Left ventricle myocardium superior (tissue), 1 donor: ENCODE measurements at regions of chr7 and their contacts with region 1.

Region 1: DNA sequence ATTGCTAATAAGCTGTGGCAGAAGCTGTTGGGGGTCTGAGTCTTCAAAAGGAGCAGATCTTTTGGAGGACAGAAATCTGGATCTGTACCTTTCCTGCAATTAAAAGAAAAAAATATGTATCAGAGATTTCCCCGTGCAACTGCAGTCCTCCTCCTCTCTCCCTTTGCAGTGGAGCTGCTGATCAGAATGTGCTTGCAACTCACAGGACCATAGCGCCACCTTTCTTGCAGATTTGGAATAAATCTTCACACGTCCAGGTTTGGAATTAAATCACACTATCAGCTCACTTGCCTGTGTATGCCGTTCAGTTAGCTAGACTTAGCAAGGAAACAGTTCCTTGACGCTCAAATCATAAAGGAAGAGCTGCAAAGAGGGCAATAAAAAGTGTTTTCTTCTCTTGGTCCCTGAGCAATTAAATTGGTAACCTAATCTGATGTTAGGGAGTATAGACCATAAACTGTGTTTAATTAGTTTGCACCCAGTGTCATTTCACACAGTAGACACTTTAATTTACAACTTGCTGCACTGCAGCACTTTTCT is 77.4 kb downstream of the PON1 start:
- DNase-seq: no peak
- ATAC-seq: peak; percentile 79

Region 2: GRCh38 chr7:94449148-94449725 is 797.7 kb before region 1 on chr7:
- intact Hi-C with region 1: loop called (anchors 5 kb)
- DNase-seq: no peak
- ATAC-seq: no peak

Region 3: DNA sequence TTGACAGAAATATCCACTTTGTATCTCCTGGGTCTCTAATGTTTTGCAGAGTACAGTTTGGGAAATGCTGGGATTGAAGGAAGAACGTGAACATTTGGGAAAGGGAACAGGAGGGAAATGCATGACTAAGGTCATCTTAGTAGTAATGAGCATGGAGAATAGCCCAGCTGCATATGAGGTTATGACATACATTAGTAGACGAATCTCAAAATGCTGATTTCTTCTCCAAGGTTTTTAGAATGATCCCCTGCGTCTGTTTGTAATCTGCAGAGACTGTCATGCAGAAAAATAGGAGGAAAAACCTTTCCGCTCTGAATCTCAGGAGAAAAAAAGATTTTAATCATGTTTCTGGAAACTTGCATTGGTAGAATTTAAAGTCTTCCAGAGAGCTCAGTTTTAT is 205.9 kb before region 1 on chr7:
- intact Hi-C with region 1: no loop called
- DNase-seq: no peak
- ATAC-seq: no peak

Region 4: DNA sequence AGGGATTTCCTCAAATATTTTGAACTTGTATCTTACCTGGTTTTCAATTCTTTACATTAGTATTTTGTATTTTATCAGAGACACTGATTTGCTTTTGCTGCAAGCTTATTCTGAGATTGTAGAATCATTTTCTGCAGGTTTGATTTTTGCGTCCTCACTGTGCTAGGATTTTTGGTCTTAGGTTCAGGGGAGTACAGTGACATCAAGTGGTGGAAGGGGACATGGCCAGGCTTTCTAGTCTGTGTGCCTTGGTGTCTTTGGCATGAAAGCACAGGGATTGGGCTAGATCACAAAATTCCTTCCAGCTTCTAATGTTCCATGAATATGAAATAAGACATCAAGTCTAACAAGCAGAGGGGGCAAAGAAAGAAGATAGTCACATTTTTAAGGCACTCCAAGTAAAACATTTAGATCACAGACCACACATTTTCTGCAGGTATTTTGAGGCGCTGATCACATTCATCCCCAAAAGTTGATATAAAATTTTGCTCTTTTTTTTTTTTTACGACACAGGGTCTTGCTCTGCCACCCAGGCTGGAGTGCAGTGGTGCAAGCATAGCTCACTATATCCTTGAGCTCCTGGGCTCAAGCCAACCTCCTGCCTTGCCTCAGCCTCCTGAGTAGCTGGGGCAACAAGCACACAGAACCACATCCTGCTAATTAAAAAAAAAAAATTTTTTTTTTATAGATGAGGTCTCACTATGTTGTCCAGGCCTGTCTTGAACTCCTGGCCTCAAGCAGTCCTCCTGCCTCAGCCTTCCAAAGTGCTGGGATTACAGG is 46.9 kb before region 1 on chr7:
- intact Hi-C with region 1: no loop called
- DNase-seq: peak; percentile 30
- ATAC-seq: peak; percentile 81